Activated T-helper 2 cell treated with anti-CD3 and anti-CD28 coated beads, Interferon-gamma antibody, Interleukin-2, Interleukin-4, amounts not matched to agents 10 μg/mL and 5 μg/mL and 100 μg/mL, durations not matched to agents 14 hours and 24 hours and 36 hours (primary cell): ENCODE measurements at regions of chr3 and their contacts with region 1.

Region 1: DNA sequence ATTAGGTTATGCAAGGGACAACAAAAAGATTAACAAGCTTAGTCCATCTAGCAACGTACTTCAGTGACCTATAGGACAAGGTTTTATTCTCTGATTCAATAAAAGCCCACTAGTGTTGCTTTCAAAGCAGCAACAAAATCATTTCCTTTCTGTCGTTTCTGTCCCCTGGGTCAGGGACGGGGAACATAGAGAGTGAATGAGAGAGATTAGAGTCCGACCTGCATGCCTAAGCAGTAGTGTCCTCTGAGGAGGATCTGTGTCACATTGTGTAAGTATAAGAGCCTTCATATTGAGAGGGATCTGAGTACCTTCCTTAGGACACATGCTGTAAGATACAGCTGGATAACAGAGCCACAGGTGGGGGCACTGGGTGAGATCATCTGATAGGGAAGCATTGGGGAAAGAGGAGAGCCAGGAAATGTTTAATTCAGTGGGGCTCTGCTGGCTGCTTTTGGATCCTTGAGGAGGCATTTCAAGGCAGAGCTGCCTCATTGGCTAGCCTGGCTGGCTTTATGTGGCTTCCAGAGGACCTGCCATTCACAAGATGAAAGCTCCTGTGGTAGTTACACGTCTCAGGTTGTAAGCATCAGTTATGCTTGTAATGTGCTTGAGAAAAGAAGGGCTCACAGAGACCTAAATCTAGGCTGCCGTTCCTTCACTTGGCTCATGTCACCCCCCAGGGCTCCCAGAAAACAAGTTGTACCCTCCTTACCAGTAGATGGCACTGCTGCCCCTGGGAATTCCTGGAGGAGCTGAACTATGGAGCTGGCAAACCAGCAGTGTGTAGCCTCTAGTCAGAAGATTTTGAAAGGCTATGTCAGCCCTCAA is 2.7 kb downstream of the TMEM108 start:
- DNase-seq: no peak
- H3K4me3 Mint-ChIP-seq: no peak overlapping the region
- H3K27ac Mint-ChIP-seq: no peak overlapping the region
- H3K4me1 Mint-ChIP-seq: peaks cover 2% of the 10 kb centered on the region
- H3K27me3 Mint-ChIP-seq: peaks cover 37% of the 10 kb centered on the region

Region 2: GRCh38 chr3:133384331-133385027 is 343.6 kb after region 1 on chr3:
- intact Hi-C with region 1: loop called (anchors 1 kb)
- DNase-seq: no peak
- H3K4me3 Mint-ChIP-seq: no peak overlapping the region
- H3K27ac Mint-ChIP-seq: no peak overlapping the region
- H3K4me1 Mint-ChIP-seq: no peaks in the 10 kb centered on the region
- H3K27me3 Mint-ChIP-seq: peaks cover 6% of the 10 kb centered on the region